PC-3 (cell line): ENCODE measurements at regions of chr9 and their contacts with region 1.

Region 1: DNA sequence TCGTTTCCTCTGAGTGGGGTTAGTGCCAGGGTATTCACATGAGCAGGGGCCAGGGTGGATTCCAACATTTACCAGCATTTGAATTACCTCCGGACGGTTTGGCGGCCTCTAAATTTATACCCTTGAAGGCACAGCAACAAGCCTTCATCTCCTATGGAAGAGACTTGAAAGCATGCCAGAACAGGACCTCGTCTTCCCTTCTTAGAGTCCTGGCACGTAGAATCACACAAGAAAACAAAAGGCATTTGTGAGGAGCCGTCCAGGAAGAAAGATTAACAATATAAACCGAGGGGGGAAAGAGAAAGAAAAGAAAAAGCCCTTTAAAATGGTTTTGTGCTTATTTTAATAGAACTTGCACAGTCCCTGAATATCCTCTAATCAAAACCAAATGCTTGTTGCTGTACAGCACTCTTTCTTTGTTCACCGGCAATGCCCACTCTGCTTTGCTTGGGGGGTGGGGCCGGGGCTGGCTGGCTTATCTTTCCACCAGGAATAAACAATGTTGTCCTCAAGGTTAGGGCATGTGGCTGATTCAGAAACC is 575.8 kb upstream of the ZNF462 start:
- DNase-seq: no peak
- ATAC-seq: no peak
- H3K4me3 ChIP-seq: no peak overlapping the region
- H3K27ac ChIP-seq: no peak overlapping the region
- H3K4me1 ChIP-seq: no peaks in the 10 kb centered on the region
- H3K27me3 ChIP-seq: no peaks in the 10 kb centered on the region
- CTCF ChIP-seq: no peak

Region 2: GRCh38 chr9:106350777-106351176 is 63.6 kb after region 1 on chr9:
- CTCF ChIA-PET with region 1: no interaction called
- POLR2A ChIA-PET with region 1: no interaction called
- intact Hi-C with region 1: loop called (anchors 2 kb)
- DNase-seq: no peak
- ATAC-seq: no peak
- H3K4me3 ChIP-seq: no peak overlapping the region
- H3K27ac ChIP-seq: no peak overlapping the region
- H3K4me1 ChIP-seq: no peaks in the 10 kb centered on the region
- H3K27me3 ChIP-seq: no peaks in the 10 kb centered on the region
- CTCF ChIP-seq: no peak